Esophagus muscularis mucosa (tissue), 4 donors: ENCODE measurements at regions of chr19 and their contacts with region 1.

Region 1: DNA sequence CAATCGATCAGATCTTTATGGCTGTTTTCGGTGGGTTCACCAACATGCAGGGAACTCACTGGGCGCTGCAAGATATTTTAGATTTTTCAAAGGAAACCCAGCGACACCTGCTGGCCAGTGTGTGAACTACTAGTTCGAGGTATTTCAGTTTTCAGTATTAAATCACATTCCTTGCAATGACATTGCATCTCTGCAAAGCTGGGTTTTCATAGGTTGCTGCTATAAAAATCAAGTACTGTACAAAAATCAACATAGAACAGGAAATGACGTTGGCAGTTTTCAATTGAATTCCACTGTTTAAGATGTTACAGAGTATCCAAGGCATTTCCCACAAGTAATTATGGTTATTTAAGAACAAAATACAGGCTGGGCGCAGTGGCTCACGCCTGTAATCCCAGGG is 17.6 kb downstream of the LIG1 start:
- DNase-seq: no peak
- H3K4me3 ChIP-seq: no peak overlapping the region
- H3K27ac ChIP-seq: no peak overlapping the region
- H3K4me1 ChIP-seq: peaks cover 0 to 22% (median 18%) of the 10 kb centered on the region in 4 donors
- H3K27me3 ChIP-seq: no peaks in the 10 kb centered on the region
- CTCF ChIP-seq: peak; percentile 84 to 91 (median 91)
- EP300 ChIP-seq: no peak
- POLR2A ChIP-seq: no peak

Region 2: DNA sequence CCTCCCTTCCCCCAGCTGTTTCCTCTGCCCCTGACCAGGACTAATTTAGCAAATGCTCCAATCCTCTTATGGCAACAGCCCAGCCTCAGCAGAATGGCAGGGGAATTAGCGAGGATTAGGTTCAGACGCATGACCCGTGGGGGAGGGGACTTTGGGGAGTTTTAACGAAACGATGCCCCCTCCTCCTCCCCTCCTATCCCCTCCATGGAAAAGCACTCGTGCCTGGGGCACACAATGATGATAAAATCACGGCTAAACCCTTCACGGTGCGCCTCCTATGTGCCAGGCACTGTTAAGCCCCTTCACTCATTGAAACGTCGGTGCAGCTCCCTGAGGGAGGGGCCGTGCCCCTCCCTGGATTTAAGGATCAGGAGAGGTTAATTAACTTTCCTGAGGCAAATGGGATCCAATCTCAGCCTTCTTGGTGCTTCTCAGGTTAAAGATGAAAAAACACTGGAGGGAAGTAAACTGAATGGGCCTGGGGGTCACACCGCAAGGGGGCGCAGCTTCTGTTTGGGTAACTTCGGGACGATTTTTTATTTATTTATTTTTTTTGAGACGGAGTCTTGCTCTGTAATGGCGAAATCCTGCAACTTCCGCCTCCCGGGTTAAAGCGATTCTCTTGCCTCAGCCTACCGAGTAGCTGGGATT is 303.6 kb before region 1 on chr19:
- intact Hi-C with region 1: no loop called
- DNase-seq: no peak
- H3K4me3 ChIP-seq: no peak overlapping the region
- H3K27ac ChIP-seq: no peak overlapping the region
- H3K4me1 ChIP-seq: peaks cover 0 to 4% (median 1%) of the 10 kb centered on the region in 4 donors
- H3K27me3 ChIP-seq: peaks cover 0 to 78% (median 20%) of the 10 kb centered on the region in 4 donors
- CTCF ChIP-seq: peak in 2 of 3 experiments; percentile 28 to 29
- EP300 ChIP-seq: no peak
- POLR2A ChIP-seq: no peak

Region 3: DNA sequence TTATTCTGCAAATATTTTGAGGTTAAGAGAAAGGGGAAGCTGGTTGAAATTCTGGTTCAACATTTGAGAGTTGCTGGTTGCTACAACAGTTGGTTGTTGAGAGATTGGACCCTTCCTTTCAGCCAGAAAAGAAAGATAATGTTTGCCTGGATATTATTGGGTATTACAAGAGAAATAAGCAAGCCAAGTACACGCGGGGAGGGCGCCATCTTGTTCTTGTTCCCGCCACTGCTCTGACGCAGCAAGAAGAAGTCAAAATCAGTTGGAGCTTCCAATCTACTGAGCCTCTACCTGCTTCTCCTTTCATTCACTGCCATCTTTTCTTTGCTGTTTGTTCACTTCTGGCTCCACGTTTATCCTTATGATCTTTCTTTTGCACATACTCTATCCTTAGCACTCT is 179.0 kb before region 1 on chr19:
- intact Hi-C with region 1: loop called (anchors 10 kb)
- DNase-seq: peak; percentile 37
- H3K4me3 ChIP-seq: no peak overlapping the region
- H3K27ac ChIP-seq: no peak overlapping the region
- H3K4me1 ChIP-seq: no peaks in the 10 kb centered on the region
- H3K27me3 ChIP-seq: peaks cover 0 to 45% (median 0%) of the 10 kb centered on the region in 4 donors
- CTCF ChIP-seq: no peak
- EP300 ChIP-seq: no peak
- POLR2A ChIP-seq: no peak

Region 4: DNA sequence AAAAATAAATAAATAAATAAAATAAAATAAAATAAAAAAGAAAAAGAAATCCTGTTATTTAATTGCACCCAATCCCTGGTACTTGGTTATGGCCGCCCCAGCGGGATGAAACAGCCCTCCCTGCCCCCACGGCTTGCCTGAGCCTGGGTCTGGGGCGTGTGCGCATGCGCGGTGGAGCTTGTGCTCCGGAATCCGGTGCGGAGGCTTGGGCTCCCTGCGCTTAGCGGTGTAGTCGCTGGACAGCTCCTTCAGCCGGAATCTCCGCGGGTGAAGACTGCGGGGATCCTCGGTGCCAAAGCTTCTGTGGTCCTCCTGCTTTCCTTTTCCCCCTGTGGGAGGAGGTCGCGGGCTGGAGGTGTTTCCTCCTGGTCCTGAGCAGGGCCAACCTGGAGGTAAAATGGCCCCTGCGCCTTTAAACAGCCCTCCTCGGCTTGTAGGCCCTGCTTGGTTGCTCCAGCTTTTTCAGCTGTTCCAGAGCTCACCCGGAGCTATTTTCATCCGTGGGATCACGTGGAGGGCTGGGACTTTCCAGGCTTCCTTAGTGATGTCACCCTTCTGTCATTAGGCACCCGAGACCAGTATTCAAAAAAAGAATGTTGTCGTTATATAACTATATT is 42.1 kb before region 1 on chr19 and contains the start of gene PLA2G4C:
- intact Hi-C with region 1: loop called (anchors 1 kb)
- DNase-seq: peak; percentile 94
- H3K4me3 ChIP-seq: peak within 1 kb of the TSS; percentile 45 to 61 (median 54)
- H3K27ac ChIP-seq: peak within 1 kb of the TSS; percentile 85 to 94 (median 86)
- H3K4me1 ChIP-seq: peaks cover 20 to 34% (median 33%) of the 10 kb centered on the region in 4 donors
- H3K27me3 ChIP-seq: no peaks in the 10 kb centered on the region
- CTCF ChIP-seq: peak in 1 of 3 experiments; percentile 12
- EP300 ChIP-seq: no peak
- POLR2A ChIP-seq: peak; percentile 41
- total RNA-seq, gene PLA2G4C: 5.3 to 15.1 (median 9.3) TPM